Caco-2 (cell line): ENCODE measurements at regions of chr20 and their contacts with region 1.

Region 1: GRCh38 chr20:51541189-51542032 is 1.1 kb downstream of the NFATC2 start:
- DNase-seq: peak; percentile 82 to 89
- H3K4me3 ChIP-seq: peak overlapping the region; percentile 44
- H3K4me3 Mint-ChIP-seq: peak overlapping the region; percentile 76
- H3K27ac Mint-ChIP-seq: peak overlapping the region; percentile 26
- H3K4me1 ChIP-seq: peaks cover 29% of the 10 kb centered on the region
- H3K4me1 Mint-ChIP-seq: peaks cover 18% of the 10 kb centered on the region
- H3K27me3 ChIP-seq: no peaks in the 10 kb centered on the region
- H3K27me3 Mint-ChIP-seq: peaks cover 7% of the 10 kb centered on the region
- CTCF ChIP-seq: peak in 1 of 2 experiments; percentile 17

Region 2: DNA sequence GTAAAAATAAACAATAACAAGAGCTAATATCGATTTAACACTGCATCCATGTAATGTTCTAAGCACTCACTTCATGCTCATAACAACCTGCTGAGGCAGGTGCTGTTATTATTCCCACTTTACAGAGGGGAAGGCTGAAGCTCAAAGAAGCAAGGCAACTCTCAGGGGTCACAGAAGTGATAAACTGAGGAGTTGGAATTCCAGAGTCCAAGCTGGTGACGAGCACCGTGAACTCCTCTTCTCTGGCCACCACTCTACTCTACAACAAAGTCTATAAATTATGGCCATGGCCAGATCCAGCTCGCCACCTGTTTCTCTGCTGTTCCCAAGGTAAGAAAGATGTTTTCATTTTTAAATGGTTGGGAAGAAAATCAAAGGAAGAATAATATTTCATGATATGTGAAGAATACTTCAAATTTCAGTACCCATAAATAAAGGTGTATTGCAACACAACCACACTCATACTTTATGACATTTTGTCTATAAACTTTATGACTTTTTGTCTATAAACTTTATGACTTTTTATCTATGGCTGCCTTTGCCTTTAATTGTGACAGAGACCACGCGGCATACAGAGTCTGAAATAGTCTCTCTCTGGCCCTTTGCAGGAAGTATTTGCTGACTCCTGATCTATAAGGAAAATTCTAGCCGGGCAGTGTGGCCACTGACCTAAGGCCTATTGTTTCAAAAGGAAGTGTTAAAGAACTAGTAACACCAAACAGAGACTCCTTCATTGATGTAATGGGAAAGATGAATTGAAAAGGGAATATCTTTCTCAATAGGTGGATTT is 405.3 kb before region 1 on chr20:
- CTCF ChIA-PET with region 1: no interaction called
- POLR2A ChIA-PET with region 1: no interaction called
- intact Hi-C with region 1: no loop called
- DNase-seq: peak; percentile 32 to 62
- H3K4me3 ChIP-seq: no peak overlapping the region
- H3K4me3 Mint-ChIP-seq: no peak overlapping the region
- H3K27ac Mint-ChIP-seq: no peak overlapping the region
- H3K4me1 ChIP-seq: no peaks in the 10 kb centered on the region; the same call in 1 of the 2 replicates
- H3K4me1 Mint-ChIP-seq: peaks cover 5% of the 10 kb centered on the region
- H3K27me3 ChIP-seq: no peaks in the 10 kb centered on the region
- H3K27me3 Mint-ChIP-seq: peaks cover 21% of the 10 kb centered on the region
- CTCF ChIP-seq: no peak

Region 3: GRCh38 chr20:51385646-51386530 is 155.5 kb before region 1 on chr20:
- CTCF ChIA-PET with region 1: interaction called, 7 read pairs
- POLR2A ChIA-PET with region 1: no interaction called
- intact Hi-C with region 1: loop called (anchors 5 kb)
- DNase-seq: peak in 1 of 2 experiments; percentile 68
- H3K4me3 ChIP-seq: no peak overlapping the region
- H3K4me3 Mint-ChIP-seq: no peak overlapping the region
- H3K27ac Mint-ChIP-seq: no peak overlapping the region
- H3K4me1 ChIP-seq: peaks cover 14% of the 10 kb centered on the region
- H3K4me1 Mint-ChIP-seq: peaks cover 20% of the 10 kb centered on the region
- H3K27me3 ChIP-seq: no peaks in the 10 kb centered on the region
- H3K27me3 Mint-ChIP-seq: no peaks in the 10 kb centered on the region
- CTCF ChIP-seq: peak; percentile 81 to 88

Region 4: GRCh38 chr20:51447097-51447771 is 94.2 kb before region 1 on chr20:
- CTCF ChIA-PET with region 1: no interaction called
- POLR2A ChIA-PET with region 1: no interaction called
- intact Hi-C with region 1: loop called (anchors 5 kb)
- DNase-seq: peak in 1 of 2 experiments; percentile 34
- H3K4me3 ChIP-seq: no peak overlapping the region
- H3K4me3 Mint-ChIP-seq: peak overlapping the region; percentile 20
- H3K27ac Mint-ChIP-seq: peak overlapping the region; percentile 57
- H3K4me1 ChIP-seq: peaks cover 24% of the 10 kb centered on the region
- H3K4me1 Mint-ChIP-seq: peaks cover 38% of the 10 kb centered on the region
- H3K27me3 ChIP-seq: no peaks in the 10 kb centered on the region
- H3K27me3 Mint-ChIP-seq: no peaks in the 10 kb centered on the region
- CTCF ChIP-seq: no peak

Region 5: GRCh38 chr20:51529081-51529681 is 12.2 kb before region 1 on chr20:
- CTCF ChIA-PET with region 1: interaction called, 10 read pairs
- POLR2A ChIA-PET with region 1: interaction called, 4 read pairs
- intact Hi-C with region 1: loop called (anchors 1 kb)
- DNase-seq: peak; percentile 78 to 86
- H3K4me3 ChIP-seq: 0 out of 2 replicates have a peak overlapping the region, but pooled peaks have one; percentile 6
- H3K4me3 Mint-ChIP-seq: peak overlapping the region; percentile 71
- H3K27ac Mint-ChIP-seq: peak overlapping the region; percentile 59
- H3K4me1 ChIP-seq: peaks cover 73% of the 10 kb centered on the region
- H3K4me1 Mint-ChIP-seq: peaks cover 55% of the 10 kb centered on the region
- H3K27me3 ChIP-seq: no peaks in the 10 kb centered on the region
- H3K27me3 Mint-ChIP-seq: no peaks in the 10 kb centered on the region
- CTCF ChIP-seq: no peak

Region 6: GRCh38 chr20:51584737-51585136 is 43.3 kb after region 1 on chr20:
- CTCF ChIA-PET with region 1: no interaction called
- POLR2A ChIA-PET with region 1: no interaction called
- intact Hi-C with region 1: no loop called
- DNase-seq: no peak
- H3K4me3 ChIP-seq: no peak overlapping the region
- H3K4me3 Mint-ChIP-seq: no peak overlapping the region
- H3K27ac Mint-ChIP-seq: no peak overlapping the region
- H3K4me1 ChIP-seq: no peaks in the 10 kb centered on the region
- H3K4me1 Mint-ChIP-seq: peaks cover 7% of the 10 kb centered on the region
- H3K27me3 ChIP-seq: no peaks in the 10 kb centered on the region
- H3K27me3 Mint-ChIP-seq: no peaks in the 10 kb centered on the region
- CTCF ChIP-seq: no peak

Region 7: GRCh38 chr20:51595058-51595532 is 53.7 kb after region 1 on chr20:
- CTCF ChIA-PET with region 1: interaction called, 6 read pairs
- POLR2A ChIA-PET with region 1: no interaction called
- intact Hi-C with region 1: loop called (anchors 2 kb)
- DNase-seq: peak; percentile 94 to 95
- H3K4me3 ChIP-seq: no peak overlapping the region
- H3K4me3 Mint-ChIP-seq: peak overlapping the region; percentile 10
- H3K27ac Mint-ChIP-seq: no peak overlapping the region
- H3K4me1 ChIP-seq: peaks cover 6% of the 10 kb centered on the region
- H3K4me1 Mint-ChIP-seq: peaks cover 6% of the 10 kb centered on the region
- H3K27me3 ChIP-seq: no peaks in the 10 kb centered on the region
- H3K27me3 Mint-ChIP-seq: no peaks in the 10 kb centered on the region
- CTCF ChIP-seq: peak; percentile 98 to 100